Dendritic cell treated with granulocyte-macrophage colony-stimulating factor and Interleukin-4, amounts not matched to agents 40 ng/mL and 50 ng/mL, for 4 days (primary cell): ENCODE measurements at regions of chr9 and their contacts with region 1.

Region 1: DNA sequence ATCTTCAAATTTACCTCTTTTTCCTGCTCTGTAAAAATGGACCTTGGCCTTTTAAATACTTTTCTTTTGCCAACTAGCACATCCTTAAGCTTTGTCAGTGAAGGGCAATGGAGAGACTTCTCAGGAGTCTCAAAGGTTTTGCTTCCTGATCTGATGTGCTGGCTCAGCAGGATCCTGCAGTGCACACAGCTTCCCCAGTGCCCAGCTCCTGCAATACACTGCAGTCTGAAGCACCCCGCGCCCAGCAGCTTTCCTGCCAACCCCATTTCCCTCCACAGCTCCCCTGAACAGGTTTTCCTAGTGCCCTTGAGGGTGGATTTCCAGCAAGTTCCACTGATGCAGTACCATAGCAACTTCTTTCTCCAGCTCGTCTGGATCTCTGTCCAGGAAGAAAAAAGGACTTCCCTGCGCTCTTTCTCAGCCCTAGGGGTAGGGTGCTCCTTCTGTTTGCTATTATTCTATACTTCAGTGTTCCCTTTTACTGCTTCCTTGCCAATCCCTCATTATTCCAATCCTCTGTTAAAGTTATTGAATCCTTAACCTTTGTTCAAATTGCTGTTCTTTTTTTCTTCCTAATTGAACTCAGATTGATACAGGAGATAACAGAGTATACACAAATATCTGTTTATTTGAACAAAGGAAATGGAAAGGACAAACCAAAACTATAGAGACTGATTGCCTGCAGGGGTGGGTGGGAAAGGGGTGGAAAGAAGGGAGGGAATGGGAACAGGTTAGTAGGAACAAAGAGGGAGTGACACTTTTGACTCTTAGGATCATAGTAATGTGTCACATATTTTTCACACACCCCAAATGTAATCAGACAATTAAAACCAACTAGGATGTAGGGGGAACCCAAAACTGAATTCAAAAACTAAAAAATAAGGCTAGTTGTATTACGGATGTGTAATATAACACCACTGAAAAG is 8.5 kb downstream of the SNAPC3 start:
- H3K4me3 Mint-ChIP-seq: peak overlapping the region; percentile 51
- H3K27ac Mint-ChIP-seq: peak overlapping the region; percentile 69
- H3K4me1 Mint-ChIP-seq: peaks cover 62% of the 10 kb centered on the region
- H3K27me3 Mint-ChIP-seq: no peaks in the 10 kb centered on the region

Region 2: GRCh38 chr9:15469406-15469805 is 38.2 kb after region 1 on chr9:
- intact Hi-C with region 1: loop called (anchors 5 kb)
- H3K4me3 Mint-ChIP-seq: no peak overlapping the region
- H3K27ac Mint-ChIP-seq: no peak overlapping the region
- H3K4me1 Mint-ChIP-seq: no peaks in the 10 kb centered on the region
- H3K27me3 Mint-ChIP-seq: no peaks in the 10 kb centered on the region